CD4-positive, alpha-beta memory T cell (primary cell): ENCODE measurements at regions of chr22 and their contacts with region 1.

Region 1: GRCh38 chr22:38872172-38872830 is at the start of gene CBX6:
- DNase-seq: peak; percentile 91 to 96 (median 94)
- H3K4me3 ChIP-seq: peak within 1 kb of the TSS; percentile 71 to 72
- H3K4me3 Mint-ChIP-seq: peak within 1 kb of the TSS; percentile 93 to 96 (median 94)
- H3K27ac ChIP-seq: peak within 1 kb of the TSS; percentile 76
- H3K27ac Mint-ChIP-seq: peak within 1 kb of the TSS; percentile 90 to 97 (median 94)
- H3K4me1 ChIP-seq: peaks cover 53% of the 10 kb centered on the region
- H3K4me1 Mint-ChIP-seq: peaks cover 34 to 62% (median 45%) of the 10 kb centered on the region in 4 donors
- H3K27me3 ChIP-seq: no peaks in the 10 kb centered on the region
- H3K27me3 Mint-ChIP-seq: no peaks in the 10 kb centered on the region
- total RNA-seq, gene CBX6: 85.0 to 88.0 TPM

Region 2: GRCh38 chr22:38705235-38706100 is 166.8 kb before region 1 on chr22 and contains the start of gene GTPBP1:
- CTCF ChIA-PET with region 1: no interaction called
- POLR2A ChIA-PET with region 1: interaction called, 4 read pairs
- intact Hi-C with region 1: loop called (anchors 5 kb)
- DNase-seq: peak; percentile 96 to 100 (median 100)
- H3K4me3 ChIP-seq: peak within 1 kb of the TSS; percentile 20 to 94
- H3K4me3 Mint-ChIP-seq: peak within 1 kb of the TSS; percentile 91 to 96 (median 94)
- H3K27ac ChIP-seq: peak within 1 kb of the TSS; percentile 94
- H3K27ac Mint-ChIP-seq: peak within 1 kb of the TSS; percentile 92 to 99 (median 98)
- H3K4me1 ChIP-seq: peaks cover 52% of the 10 kb centered on the region
- H3K4me1 Mint-ChIP-seq: peaks cover 48 to 69% (median 53%) of the 10 kb centered on the region in 4 donors
- H3K27me3 ChIP-seq: no peaks in the 10 kb centered on the region
- H3K27me3 Mint-ChIP-seq: peaks cover 0 to 4% of the 10 kb centered on the region in 2 donors
- total RNA-seq, gene GTPBP1: 94.1 to 96.6 TPM

Region 3: DNA sequence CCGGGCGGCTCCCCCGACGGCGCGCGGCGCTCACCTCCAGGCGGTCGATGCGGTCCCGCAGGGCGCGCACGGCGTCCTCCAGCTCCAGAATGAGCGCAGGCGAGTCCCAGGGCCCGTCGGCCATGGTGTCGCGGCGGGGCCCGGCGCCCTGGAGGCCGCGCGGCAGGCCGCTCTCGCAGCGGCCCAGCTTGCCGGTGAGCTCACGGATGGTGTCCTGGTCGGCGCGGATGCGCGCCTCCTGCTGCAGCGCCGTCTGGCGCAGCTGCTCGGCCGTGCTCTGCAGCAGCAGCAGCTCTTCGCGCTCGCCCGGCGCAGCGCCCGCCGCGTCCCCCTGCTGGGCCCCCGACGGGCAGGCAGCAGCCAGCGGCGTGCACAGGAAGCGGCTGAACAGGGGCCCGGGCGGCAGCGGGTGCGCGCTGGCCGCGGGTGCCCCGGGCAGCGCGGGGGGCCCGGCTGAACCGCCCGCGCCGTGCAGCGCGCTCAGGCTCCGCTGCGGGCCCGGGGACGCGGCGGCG is 29.0 kb before region 1 on chr22:
- CTCF ChIA-PET with region 1: interaction called, 7 read pairs
- POLR2A ChIA-PET with region 1: interaction called, 24 read pairs
- intact Hi-C with region 1: no loop called
- DNase-seq: peak; percentile 56 to 66 (median 61)
- H3K4me3 ChIP-seq: peak overlapping the region in 1 of 2 donors; percentile 50
- H3K4me3 Mint-ChIP-seq: peak overlapping the region in 1 of 8 donors; percentile 32
- H3K27ac ChIP-seq: no peak overlapping the region
- H3K27ac Mint-ChIP-seq: peak overlapping the region in 1 of 7 donors; percentile 69
- H3K4me1 ChIP-seq: peaks cover 20% of the 10 kb centered on the region
- H3K4me1 Mint-ChIP-seq: peaks cover 7 to 31% (median 17%) of the 10 kb centered on the region in 4 donors
- H3K27me3 ChIP-seq: peaks cover 9% of the 10 kb centered on the region
- H3K27me3 Mint-ChIP-seq: peaks cover 0 to 12% of the 10 kb centered on the region in 2 donors

Region 4: GRCh38 chr22:38981992-38982927 is 110.0 kb after region 1 on chr22 and contains the start of gene APOBEC3B:
- CTCF ChIA-PET with region 1: no interaction called
- POLR2A ChIA-PET with region 1: interaction called, 4 read pairs
- intact Hi-C with region 1: loop called (anchors 1 kb)
- DNase-seq: peak; percentile 43 to 89 (median 65)
- H3K4me3 ChIP-seq: peak within 1 kb of the TSS; percentile 28 to 36
- H3K4me3 Mint-ChIP-seq: peak within 1 kb of the TSS; percentile 85 to 94 (median 87)
- H3K27ac ChIP-seq: peak within 1 kb of the TSS; percentile 21
- H3K27ac Mint-ChIP-seq: peak within 1 kb of the TSS; percentile 48 to 97 (median 82)
- H3K4me1 ChIP-seq: peaks cover 43% of the 10 kb centered on the region
- H3K4me1 Mint-ChIP-seq: peaks cover 25 to 52% (median 29%) of the 10 kb centered on the region in 4 donors
- H3K27me3 ChIP-seq: no peaks in the 10 kb centered on the region
- H3K27me3 Mint-ChIP-seq: peaks cover 0 to 1% of the 10 kb centered on the region in 2 donors
- total RNA-seq, gene APOBEC3B: 0.32 to 0.64 TPM

Region 5: GRCh38 chr22:39013942-39014722 is 141.8 kb after region 1 on chr22 and contains the start of gene APOBEC3C:
- CTCF ChIA-PET with region 1: interaction called, 10 read pairs
- POLR2A ChIA-PET with region 1: no interaction called
- intact Hi-C with region 1: no loop called
- DNase-seq: peak; percentile 71 to 86 (median 72)
- H3K4me3 ChIP-seq: peak within 1 kb of the TSS; percentile 70 to 91
- H3K4me3 Mint-ChIP-seq: peak within 1 kb of the TSS; percentile 89 to 98 (median 94)
- H3K27ac ChIP-seq: peak within 1 kb of the TSS; percentile 65
- H3K27ac Mint-ChIP-seq: peak within 1 kb of the TSS; percentile 86 to 97 (median 95)
- H3K4me1 ChIP-seq: peaks cover 36% of the 10 kb centered on the region
- H3K4me1 Mint-ChIP-seq: peaks cover 24 to 62% (median 44%) of the 10 kb centered on the region in 4 donors
- H3K27me3 ChIP-seq: no peaks in the 10 kb centered on the region
- H3K27me3 Mint-ChIP-seq: no peaks in the 10 kb centered on the region
- total RNA-seq, gene APOBEC3C: 42.4 to 43.8 TPM

Region 6: GRCh38 chr22:39152511-39153219 is 280.4 kb after region 1 on chr22 and contains the start of gene CBX7:
- CTCF ChIA-PET with region 1: interaction called, 6 read pairs
- POLR2A ChIA-PET with region 1: interaction called, 24 read pairs
- intact Hi-C with region 1: loop called (anchors 1 kb)
- DNase-seq: peak; percentile 90 to 96 (median 94)
- H3K4me3 ChIP-seq: peak within 1 kb of the TSS; percentile 55 to 79
- H3K4me3 Mint-ChIP-seq: peak within 1 kb of the TSS; percentile 84 to 91 (median 88)
- H3K27ac ChIP-seq: peak within 1 kb of the TSS; percentile 78
- H3K27ac Mint-ChIP-seq: peak within 1 kb of the TSS; percentile 88 to 99 (median 93)
- H3K4me1 ChIP-seq: peaks cover 51% of the 10 kb centered on the region
- H3K4me1 Mint-ChIP-seq: peaks cover 22 to 48% (median 35%) of the 10 kb centered on the region in 4 donors
- H3K27me3 ChIP-seq: peaks cover 7% of the 10 kb centered on the region
- H3K27me3 Mint-ChIP-seq: peaks cover 0 to 3% of the 10 kb centered on the region in 2 donors
- total RNA-seq, gene CBX7: 181 to 198 TPM